ENCODE measurements at regions of chr16 and their contacts with region 1.

Region 1: GRCh38 chr16:31458844-31459721 is at the start of gene ARMC5:
- DNase-seq: peak; percentile 97
- ATAC-seq: peak; percentile 84
- H3K4me3 ChIP-seq: peak within 1 kb of the TSS; percentile 70 to 90
- H3K27ac ChIP-seq: peak within 1 kb of the TSS; percentile 97
- H3K4me1 ChIP-seq: peaks cover 5 to 45% of the 10 kb centered on the region in 2 experiments; a peak in 3 of 4 replicates
- H3K27me3 ChIP-seq: no peaks in the 10 kb centered on the region
- CTCF ChIP-seq: peak; percentile 36 to 66 (median 55); a peak in 4 of 6 replicates
- POLR2A ChIP-seq: peak; percentile 29
- RAD21 ChIP-seq: peak; percentile 35; the same call in 1 of the 2 replicates
- total RNA-seq, gene ARMC5: 11.8 TPM

Region 2: DNA sequence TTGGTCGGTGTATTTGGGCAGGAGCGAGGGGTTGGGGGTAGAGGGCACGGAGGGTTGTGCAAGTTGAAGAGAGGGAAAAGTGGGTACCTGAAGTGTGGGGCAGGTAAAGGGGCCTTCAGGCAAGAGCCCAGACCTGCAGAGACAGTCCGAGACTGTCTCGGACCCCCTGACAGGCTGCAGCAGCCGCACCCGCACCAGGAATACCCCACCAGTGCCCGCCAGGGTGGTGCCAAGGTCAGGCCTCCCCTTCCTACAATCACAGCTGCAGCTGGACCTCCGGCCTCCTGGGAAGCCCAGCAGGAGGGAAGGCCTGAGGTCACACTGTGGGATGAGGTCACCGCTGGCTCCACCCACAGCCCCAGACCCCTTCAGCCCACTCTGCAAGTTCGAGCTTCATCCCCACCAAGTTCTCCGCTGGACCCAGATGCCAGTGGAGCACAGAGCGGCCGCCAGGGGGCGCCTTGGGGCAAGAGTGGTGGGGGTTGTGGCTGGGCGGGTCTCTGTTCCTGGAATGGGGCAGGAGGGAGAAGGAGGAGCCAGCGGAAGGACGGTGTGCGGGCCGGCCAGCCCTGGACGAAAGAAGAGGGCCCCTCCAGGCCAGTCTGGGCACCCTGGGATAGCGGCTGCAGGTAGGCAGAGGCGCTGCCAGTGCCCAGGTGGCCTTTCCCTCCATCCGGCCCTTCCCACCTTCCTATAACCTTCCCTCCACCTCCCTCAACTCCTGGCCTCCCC is 474.2 kb before region 1 on chr16 and contains the start of gene HSD3B7:
- CTCF ChIA-PET with region 1: interaction called, 11 read pairs
- POLR2A ChIA-PET with region 1: no interaction called
- RAD21 ChIA-PET with region 1: no interaction called
- intact Hi-C with region 1: no loop called
- DNase-seq: peak; percentile 58
- ATAC-seq: peak; percentile 91
- H3K4me3 ChIP-seq: peak within 1 kb of the TSS; percentile 35 to 45
- H3K27ac ChIP-seq: peak within 1 kb of the TSS; percentile 49; the same call in 1 of the 2 replicates
- H3K4me1 ChIP-seq: peaks cover 0 to 14% of the 10 kb centered on the region in 2 experiments; a peak in 3 of 4 replicates
- H3K27me3 ChIP-seq: no peaks in the 10 kb centered on the region
- CTCF ChIP-seq: peak; percentile 87 to 98 (median 92)
- POLR2A ChIP-seq: no peak
- RAD21 ChIP-seq: peak; percentile 92
- total RNA-seq, gene HSD3B7: 8.6 TPM

Region 3: GRCh38 chr16:31142109-31143010 is 316.7 kb before region 1 on chr16:
- CTCF ChIA-PET with region 1: interaction called, 10 read pairs
- POLR2A ChIA-PET with region 1: no interaction called
- RAD21 ChIA-PET with region 1: no interaction called
- intact Hi-C with region 1: loop called (anchors 5 kb)
- DNase-seq: peak; percentile 96
- ATAC-seq: peak; percentile 85
- H3K4me3 ChIP-seq: peak overlapping the region; percentile 30 to 48
- H3K27ac ChIP-seq: peak overlapping the region; percentile 72
- H3K4me1 ChIP-seq: peaks cover 36 to 53% of the 10 kb centered on the region in 2 experiments
- H3K27me3 ChIP-seq: no peaks in the 10 kb centered on the region
- CTCF ChIP-seq: peak in 2 of 3 experiments; percentile 84 to 96; a peak in 4 of 6 replicates
- POLR2A ChIP-seq: no peak
- RAD21 ChIP-seq: no peak

Region 4: GRCh38 chr16:31472709-31473203 is 13.7 kb after region 1 on chr16:
- CTCF ChIA-PET with region 1: interaction called, 32 read pairs
- POLR2A ChIA-PET with region 1: interaction called, 4 read pairs
- RAD21 ChIA-PET with region 1: no interaction called
- intact Hi-C with region 1: no loop called
- DNase-seq: peak; percentile 90
- ATAC-seq: peak; percentile 89
- H3K4me3 ChIP-seq: peak overlapping the region; percentile 66 to 72
- H3K27ac ChIP-seq: peak overlapping the region; percentile 78
- H3K4me1 ChIP-seq: peaks cover 11 to 34% of the 10 kb centered on the region in 2 experiments
- H3K27me3 ChIP-seq: no peaks in the 10 kb centered on the region
- CTCF ChIP-seq: peak; percentile 80 to 98 (median 86)
- POLR2A ChIP-seq: no peak
- RAD21 ChIP-seq: peak; percentile 67

Region 5: DNA sequence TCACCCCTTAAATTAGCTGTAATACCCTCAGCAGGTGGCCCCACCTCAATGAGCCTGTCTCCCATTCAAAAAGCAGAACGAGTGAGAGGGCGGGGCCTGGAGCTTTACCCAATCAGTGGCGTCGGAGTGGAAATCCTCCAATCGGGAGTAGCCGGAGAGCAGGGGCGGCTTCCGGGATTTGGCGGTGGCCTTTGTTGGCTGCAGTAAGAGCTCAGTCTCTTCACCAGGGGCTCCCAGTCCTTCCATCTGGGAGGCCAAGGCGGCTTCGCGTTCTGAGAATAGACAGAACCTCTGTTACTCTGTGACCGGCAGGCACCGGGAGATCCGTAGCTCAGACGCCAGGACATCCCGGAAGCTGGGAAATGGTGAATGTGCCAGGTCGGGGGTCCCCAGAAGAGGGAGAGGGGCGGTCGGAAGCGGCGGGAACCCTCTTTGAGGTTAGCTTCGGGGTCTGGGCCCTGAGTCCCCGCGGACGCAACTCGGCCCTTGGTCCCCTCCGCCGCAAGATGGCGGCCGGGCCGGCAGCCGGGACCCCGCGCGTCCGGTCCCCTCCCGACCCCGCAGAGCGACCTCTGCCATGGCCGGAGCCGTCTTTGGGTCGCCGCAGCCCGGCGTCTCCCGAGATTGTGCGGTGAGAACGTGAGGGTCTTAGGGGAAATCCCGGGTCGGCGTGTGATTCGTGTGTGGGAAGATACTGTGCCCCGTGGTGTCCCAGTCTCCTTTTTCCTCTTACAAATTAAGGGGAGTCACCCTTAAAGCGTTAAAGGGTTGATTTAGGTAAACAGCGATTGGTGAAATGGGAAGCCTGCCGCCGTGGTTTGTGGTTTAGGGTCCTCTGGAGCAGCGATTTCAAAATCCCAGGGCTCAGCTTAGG is 254.2 kb after region 1 on chr16:
- CTCF ChIA-PET with region 1: interaction called, 7 read pairs
- POLR2A ChIA-PET with region 1: interaction called, 12 read pairs
- RAD21 ChIA-PET with region 1: no interaction called
- intact Hi-C with region 1: no loop called
- DNase-seq: peak; percentile 87
- ATAC-seq: peak; percentile 91
- H3K4me3 ChIP-seq: peak overlapping the region; percentile 89 to 93
- H3K27ac ChIP-seq: peak overlapping the region; percentile 94
- H3K4me1 ChIP-seq: peaks cover 6 to 17% of the 10 kb centered on the region in 2 experiments; a peak in 3 of 4 replicates
- H3K27me3 ChIP-seq: no peaks in the 10 kb centered on the region
- CTCF ChIP-seq: no peak
- POLR2A ChIP-seq: peak; percentile 95
- RAD21 ChIP-seq: no peak